Posterior vena cava (tissue), 2 donors: ENCODE measurements at regions of chr13 and their contacts with region 1.

Region 1: DNA sequence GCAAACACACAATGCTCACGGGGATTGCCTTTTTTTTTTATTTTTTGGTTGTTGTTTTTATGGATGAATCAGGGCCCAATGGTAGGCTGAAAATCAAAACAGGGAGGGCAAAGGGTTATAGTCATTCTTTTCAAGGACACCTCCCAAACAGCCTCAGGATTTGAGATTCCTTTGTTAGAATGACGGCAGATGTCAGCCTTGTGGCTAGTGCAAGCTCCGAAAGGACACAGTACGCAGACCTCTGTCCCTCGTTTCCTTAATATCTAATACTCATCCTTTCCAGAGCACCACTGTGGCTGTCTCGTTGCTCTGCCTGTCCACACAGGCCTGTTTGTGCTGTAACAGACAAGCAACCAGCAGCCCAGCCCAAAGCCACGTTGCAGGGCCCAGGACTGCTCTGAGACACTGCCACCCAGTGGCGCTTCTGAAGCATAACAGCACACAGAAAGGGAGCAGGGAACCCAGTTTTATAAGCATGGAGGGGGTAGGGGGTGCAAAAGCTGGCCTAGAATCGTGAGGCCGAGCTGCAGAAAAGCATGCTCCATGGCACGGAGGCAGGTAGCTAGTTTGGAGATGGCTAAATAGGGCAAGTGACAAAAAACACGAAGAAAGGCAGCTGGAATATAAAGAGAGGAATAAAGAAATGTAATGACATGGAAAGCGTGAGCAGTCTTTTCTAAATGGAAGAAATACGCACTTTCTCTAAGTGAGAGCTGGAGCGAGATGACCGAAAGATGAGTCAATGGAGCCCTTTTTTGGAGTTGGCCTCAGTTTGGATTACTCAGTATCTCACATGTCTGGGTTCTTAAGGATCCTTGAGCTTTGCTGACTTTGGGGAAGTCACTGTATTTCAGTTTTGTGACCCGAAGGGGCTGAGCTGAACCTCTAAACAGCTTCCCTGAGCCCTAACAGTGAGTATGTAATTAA is 40.7 kb upstream of the MEDAG start:
- DNase-seq: peak; percentile 95

Region 2: DNA sequence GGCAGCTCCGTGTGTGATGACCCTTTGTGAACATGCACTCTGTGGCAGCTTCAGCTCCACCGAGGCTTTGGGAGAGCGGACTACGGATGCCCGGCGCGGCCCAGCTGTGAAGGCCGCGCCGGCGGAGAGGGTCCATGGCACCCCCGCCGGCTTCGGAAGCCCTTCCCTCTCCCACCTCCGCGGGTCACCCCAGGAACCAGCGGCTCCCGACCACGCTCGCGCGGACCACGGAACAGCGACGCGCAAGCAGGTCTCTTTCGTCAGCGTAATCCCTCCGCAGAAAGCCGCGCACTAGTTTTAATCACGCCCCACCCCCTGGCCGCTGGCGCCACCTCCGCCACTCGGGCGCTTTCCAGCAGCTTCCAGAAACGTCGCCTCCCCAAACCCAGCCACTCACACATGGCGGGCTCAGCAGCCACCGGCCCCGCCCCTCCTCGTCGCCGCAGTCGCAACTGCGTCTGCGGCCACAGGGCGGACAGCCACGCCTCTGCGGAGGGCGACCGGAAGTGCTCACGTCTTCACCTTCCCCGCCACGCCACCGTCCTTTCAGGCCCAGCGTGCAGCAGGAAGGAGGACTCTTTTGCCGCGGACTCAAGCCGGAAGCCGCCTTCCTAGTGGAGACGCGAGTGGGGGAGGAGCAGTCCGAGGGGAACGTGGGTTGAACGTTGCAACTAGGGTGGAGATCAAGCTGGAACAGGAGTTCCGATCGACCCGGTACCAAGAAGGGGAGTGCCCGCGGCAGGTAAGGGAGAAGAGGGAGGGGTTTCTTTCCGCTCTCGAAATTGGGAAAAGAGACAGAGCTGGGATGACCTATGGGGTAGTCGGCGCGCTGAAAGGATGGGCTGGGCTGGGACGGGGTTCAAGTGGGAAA is 247.8 kb before region 1 on chr13 and contains the start of gene USPL1:
- intact Hi-C with region 1: loop called in 1 of 2 experiments (anchors 10 kb)
- DNase-seq: peak; percentile 99
- total RNA-seq, gene USPL1: 13.8 to 14.2 TPM

Region 3: DNA sequence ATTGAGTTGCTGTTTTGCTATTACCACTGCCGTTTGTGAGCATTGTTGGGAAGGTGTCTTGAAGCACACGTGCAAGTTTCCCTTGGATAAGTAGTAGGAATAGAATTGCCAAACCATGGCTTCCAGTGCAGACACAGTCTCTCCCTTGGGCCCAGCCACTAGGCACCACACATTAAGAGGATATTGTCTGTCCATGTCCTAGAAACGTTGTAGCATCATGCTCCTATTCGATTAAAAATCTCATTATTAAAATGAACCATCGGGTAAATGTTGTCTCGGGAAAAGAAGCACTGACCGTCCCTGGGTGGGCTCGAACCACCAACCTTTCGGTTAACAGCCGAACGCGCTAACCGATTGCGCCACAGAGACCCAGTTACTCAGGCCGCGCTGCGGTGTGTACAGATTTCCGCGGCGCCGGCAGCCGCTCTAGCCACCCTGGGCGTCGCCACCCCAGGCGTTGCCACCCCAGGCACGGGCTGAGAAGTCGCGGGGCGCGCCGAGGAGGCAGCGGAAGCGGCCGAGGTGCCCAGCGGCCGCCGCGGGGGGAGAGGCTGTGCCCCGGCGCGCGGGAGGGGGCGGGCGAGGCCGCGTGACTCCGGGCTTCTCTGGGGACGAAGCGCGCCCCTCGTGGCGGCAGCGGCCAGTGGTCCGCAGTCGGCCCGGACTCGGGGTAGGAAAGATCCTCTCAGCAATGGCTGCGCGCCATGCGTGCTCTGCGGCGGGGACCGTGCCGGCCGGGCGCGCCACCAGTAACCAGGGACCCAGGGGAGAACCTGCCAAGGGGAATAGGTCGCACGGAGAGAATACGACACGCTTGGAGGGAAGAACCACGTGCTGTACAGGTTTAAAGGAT is 191.5 kb before region 1 on chr13:
- intact Hi-C with region 1: loop called in 1 of 2 experiments (anchors 10 kb)
- DNase-seq: peak; percentile 96

Region 4: GRCh38 chr13:30739761-30740642 is 125.4 kb before region 1 on chr13:
- intact Hi-C with region 1: loop called in 1 of 2 experiments (anchors 5 kb)
- DNase-seq: no peak

Region 5: DNA sequence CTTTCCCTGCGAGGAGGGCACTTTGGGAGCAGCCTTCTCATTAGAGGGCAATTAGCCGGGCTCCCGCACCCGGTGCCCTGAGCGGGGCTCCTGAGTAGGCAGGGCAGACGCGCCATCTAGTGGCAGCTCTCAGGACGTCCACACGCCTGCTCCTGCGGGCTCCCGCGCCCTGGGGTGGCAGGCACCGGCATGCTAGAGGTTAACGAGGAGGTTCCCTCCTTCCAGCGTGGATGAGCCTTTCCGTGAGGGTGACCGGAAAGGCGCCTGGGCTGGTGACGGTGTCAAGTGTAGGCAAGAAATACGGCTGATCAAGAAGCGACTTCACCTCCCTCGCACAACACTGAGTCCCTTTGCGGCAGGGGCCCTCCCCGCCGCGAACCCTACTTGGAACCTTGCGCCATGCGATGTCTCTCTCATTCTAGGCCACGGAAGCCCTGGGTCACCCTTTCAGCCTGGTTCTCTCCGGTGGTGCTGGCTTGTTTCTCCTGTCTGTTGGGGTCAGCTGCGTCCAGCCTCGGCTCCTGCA is 62.4 kb before region 1 on chr13:
- intact Hi-C with region 1: loop called in 1 of 2 experiments (anchors 10 kb)
- DNase-seq: peak; percentile 98

Region 6: DNA sequence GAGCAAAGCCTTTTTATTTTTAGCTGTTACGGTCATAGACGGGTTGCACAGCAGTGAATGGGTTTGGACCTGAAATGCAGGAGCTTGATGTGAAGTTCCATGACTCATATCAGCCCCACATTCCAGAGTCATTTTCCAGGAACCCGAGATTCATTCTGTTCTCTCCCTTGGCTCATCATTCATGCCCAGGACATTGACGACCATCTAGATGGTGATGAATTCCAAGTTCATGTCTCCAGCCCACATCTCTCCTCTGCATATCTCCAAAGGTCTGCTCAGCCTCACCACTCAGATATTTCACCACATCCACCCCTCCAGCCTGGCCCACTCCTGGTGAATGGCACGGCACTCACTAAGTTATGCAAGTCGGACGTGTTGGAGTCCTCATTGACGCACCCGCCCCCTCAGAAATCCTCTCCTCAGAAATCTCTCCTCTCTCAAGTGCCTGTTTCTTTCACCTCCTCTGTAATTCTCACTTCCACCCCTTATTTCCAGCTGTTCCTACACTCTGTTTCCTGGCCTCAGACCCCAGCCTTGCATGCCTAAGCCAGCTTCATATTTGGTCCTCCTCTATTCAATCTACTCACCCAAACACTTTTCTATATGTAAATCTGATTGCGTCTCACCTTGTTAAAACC is 46.9 kb before region 1 on chr13:
- intact Hi-C with region 1: loop called in 1 of 2 experiments (anchors 10 kb)
- DNase-seq: peak; percentile 91

Region 7: GRCh38 chr13:30905932-30906383 is 40.6 kb after region 1 on chr13 and contains the start of gene MEDAG:
- intact Hi-C with region 1: loop called in 1 of 2 experiments (anchors 5 kb)
- DNase-seq: peak; percentile 98
- total RNA-seq, gene MEDAG: 151 to 172 TPM